ENCODE measurements at regions of chr16 and their contacts with region 1.

Region 1: GRCh38 chr16:28166394-28167208 is 45.2 kb downstream of the XPO6 start:
- DNase-seq: peak; percentile 48
- H3K4me3 Mint-ChIP-seq: no peak overlapping the region
- H3K27ac Mint-ChIP-seq: peak overlapping the region; percentile 82
- H3K4me1 Mint-ChIP-seq: peaks cover 76% of the 10 kb centered on the region
- H3K27me3 Mint-ChIP-seq: no peaks in the 10 kb centered on the region

Region 2: GRCh38 chr16:28188085-28188916 is 21.7 kb after region 1 on chr16:
- CTCF ChIA-PET with region 1: interaction called, 3 read pairs
- POLR2A ChIA-PET with region 1: interaction called, 3 read pairs
- intact Hi-C with region 1: loop called (anchors 1 kb)
- DNase-seq: no peak
- H3K4me3 Mint-ChIP-seq: peak overlapping the region; percentile 39
- H3K27ac Mint-ChIP-seq: peak overlapping the region; percentile 93
- H3K4me1 Mint-ChIP-seq: peaks cover 94% of the 10 kb centered on the region
- H3K27me3 Mint-ChIP-seq: no peaks in the 10 kb centered on the region

Region 3: DNA sequence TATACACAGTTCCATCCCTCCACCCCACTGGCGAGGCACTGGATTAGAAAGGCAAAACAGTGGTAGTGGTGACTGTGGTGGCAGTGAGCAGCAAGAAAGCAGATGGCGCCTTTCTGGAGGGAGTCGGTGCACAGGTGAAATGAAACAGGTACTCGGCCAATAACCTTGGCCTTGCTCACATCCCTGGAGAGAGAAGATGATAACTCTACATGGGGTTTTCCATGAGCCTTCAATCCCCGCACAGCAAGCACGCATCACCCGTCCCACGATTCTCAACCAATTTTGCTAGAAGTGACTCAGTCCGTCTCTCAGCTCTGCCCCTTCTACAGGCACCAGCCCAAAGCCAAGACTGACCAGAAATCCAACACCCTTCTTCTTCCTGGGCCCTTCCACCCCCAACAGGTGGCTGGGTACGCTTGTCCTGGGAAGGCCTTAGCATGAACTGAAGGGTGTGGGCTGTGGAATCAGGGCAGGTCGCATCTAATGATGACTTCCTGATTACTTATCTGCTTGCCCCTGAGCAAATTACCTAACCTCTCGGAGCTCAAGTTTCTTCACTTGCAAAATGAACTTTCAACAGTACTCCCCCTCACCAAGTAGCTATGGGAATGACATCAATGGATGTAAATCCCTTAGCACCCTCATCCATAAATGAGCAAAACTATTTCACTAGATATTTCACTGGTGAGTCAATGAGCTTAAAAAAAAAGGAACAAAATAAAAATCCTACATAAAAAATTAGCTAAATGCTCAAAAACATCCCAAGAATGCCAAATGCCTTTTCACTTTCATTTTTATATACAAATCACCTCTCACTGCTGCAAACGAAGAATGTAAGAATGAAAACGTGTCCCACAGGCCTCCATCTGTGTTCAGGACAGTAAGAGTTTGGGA is 27.2 kb after region 1 on chr16:
- CTCF ChIA-PET with region 1: interaction called, 3 read pairs
- POLR2A ChIA-PET with region 1: interaction called, 3 read pairs
- intact Hi-C with region 1: loop called (anchors 1 kb)
- DNase-seq: peak; percentile 75
- H3K4me3 Mint-ChIP-seq: peak overlapping the region; percentile 75
- H3K27ac Mint-ChIP-seq: peak overlapping the region; percentile 98
- H3K4me1 Mint-ChIP-seq: peaks cover 85% of the 10 kb centered on the region
- H3K27me3 Mint-ChIP-seq: no peaks in the 10 kb centered on the region